ENCODE measurements at regions of chrX and their contacts with region 1.

Region 1: GRCh38 chrX:46693149-46693548 is 65.8 kb downstream of the SLC9A7 start:
- DNase-seq: no peak
- H3K4me3 ChIP-seq: no peak overlapping the region
- H3K27ac ChIP-seq: no peak overlapping the region
- H3K4me1 ChIP-seq: no peaks in the 10 kb centered on the region
- H3K27me3 ChIP-seq: no peaks in the 10 kb centered on the region
- CTCF ChIP-seq: no peak
- POLR2A ChIP-seq: no peak

Region 2: GRCh38 chrX:46722742-46723568 is 29.8 kb after region 1 on chrX:
- CTCF ChIA-PET with region 1: no interaction called
- POLR2A ChIA-PET with region 1: no interaction called
- dilution Hi-C with region 1: no loop called
- intact Hi-C with region 1: loop called (anchors 1 kb)
- DNase-seq: no peak
- H3K4me3 ChIP-seq: no peak overlapping the region
- H3K27ac ChIP-seq: no peak overlapping the region
- H3K4me1 ChIP-seq: no peaks in the 10 kb centered on the region
- H3K27me3 ChIP-seq: no peaks in the 10 kb centered on the region
- CTCF ChIP-seq: no peak
- POLR2A ChIP-seq: no peak

Measured in endothelial cell of umbilical vein (primary cell).